ENCODE measurements at regions of chr17 and their contacts with region 1.

Region 1: DNA sequence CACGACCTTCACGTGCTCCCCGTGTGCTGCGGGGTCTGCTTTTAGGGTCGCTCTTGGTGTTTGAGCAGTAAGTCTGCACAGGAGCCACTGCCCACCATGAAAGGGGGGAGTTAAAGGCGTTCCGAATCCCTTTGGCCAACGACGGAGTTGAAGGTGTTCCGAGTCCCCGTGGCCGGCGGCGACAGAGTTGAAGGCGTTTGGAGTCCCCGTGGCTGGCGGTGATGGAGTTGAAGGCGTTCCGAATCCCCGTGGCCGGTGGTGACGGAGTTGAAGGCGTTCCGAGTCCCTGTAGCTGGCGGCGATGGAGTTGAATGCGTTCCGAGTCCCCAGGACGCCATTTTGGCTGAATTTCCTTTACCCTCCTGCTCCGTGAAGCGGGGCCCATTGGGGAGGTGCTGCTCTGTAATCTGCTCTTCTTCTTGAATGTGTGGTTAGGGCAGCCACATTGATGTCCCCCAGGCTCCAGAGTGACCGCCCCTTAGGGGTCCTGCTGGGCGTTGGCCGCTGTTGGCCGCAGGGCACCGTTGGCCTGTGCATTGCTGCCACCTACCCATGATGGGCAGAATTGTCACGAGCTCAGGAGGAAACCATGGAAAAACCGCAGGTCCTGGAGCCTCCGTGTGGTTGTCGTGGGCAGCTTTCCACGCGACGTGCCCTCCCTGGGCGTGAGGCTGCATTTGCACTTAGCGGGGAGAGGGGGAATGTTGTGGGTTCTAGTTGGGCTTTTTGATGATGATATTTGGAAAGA is 73.6 kb upstream of the ZNF750 start:
- DNase-seq: no peak
- H3K4me3 ChIP-seq: no peak overlapping the region
- H3K27ac ChIP-seq: no peak overlapping the region
- H3K4me1 ChIP-seq: no peaks in the 10 kb centered on the region
- H3K27me3 ChIP-seq: no peaks in the 10 kb centered on the region
- CTCF ChIP-seq: no peak

Region 2: DNA sequence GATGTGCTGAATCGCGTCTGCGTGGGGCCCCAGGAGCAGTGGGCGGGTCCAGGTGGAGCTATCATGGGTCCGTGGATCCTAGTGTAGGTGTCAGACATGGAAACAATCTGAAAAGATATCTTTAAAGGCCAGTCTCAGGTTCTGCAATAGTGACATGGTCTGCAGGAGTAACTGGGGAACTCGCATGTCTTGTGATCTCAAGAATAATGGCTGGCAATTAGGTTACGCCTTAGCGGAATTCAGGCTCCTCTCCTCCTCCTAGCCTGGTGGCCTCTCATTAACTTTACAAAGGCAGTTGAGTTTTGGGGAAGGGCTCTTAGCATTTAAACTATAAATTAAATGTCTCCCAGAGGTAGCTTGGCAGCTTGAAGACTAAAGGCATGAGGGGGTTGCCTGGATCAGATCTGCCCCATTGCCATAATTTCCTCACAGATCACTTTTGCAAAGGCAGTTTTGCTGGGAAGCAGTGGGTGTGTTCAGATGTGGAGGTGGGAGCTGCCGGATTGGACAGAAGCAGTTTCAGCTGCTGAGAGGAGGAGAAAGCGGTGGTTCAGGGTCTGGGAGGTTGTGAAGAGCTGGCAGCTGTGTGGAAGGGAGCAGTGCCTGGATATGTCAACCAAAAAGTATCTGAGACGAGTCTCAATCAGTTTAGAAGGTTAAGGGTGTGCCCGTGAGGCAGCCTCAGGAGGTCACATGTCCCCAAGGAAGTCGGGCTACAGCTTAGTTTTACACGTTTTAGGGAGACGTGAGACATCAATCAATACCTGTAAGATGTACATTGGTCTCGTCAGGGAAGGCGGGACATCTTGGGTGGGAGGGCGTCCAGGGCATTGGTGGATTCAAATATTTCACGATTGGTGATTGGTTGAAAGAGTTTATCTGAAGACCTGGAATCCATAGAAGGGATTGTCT is 158.9 kb before region 1 on chr17:
- intact Hi-C with region 1: no loop called
- DNase-seq: peak; percentile 58
- H3K4me3 ChIP-seq: peak overlapping the region; percentile 6
- H3K27ac ChIP-seq: peak overlapping the region; percentile 47
- H3K4me1 ChIP-seq: peaks cover 4% of the 10 kb centered on the region
- H3K27me3 ChIP-seq: no peaks in the 10 kb centered on the region
- CTCF ChIP-seq: no peak

Region 3: GRCh38 chr17:82781894-82782274 is 131.6 kb before region 1 on chr17:
- intact Hi-C with region 1: loop called (anchors 5 kb)
- DNase-seq: peak; percentile 85
- H3K4me3 ChIP-seq: no peak overlapping the region
- H3K27ac ChIP-seq: no peak overlapping the region
- H3K4me1 ChIP-seq: no peaks in the 10 kb centered on the region
- H3K27me3 ChIP-seq: no peaks in the 10 kb centered on the region
- CTCF ChIP-seq: peak; percentile 94

Measured in colonic mucosa (tissue), 4 donors.